PC-9 (cell line): ENCODE measurements at regions of chr5 and their contacts with region 1.

Region 1: DNA sequence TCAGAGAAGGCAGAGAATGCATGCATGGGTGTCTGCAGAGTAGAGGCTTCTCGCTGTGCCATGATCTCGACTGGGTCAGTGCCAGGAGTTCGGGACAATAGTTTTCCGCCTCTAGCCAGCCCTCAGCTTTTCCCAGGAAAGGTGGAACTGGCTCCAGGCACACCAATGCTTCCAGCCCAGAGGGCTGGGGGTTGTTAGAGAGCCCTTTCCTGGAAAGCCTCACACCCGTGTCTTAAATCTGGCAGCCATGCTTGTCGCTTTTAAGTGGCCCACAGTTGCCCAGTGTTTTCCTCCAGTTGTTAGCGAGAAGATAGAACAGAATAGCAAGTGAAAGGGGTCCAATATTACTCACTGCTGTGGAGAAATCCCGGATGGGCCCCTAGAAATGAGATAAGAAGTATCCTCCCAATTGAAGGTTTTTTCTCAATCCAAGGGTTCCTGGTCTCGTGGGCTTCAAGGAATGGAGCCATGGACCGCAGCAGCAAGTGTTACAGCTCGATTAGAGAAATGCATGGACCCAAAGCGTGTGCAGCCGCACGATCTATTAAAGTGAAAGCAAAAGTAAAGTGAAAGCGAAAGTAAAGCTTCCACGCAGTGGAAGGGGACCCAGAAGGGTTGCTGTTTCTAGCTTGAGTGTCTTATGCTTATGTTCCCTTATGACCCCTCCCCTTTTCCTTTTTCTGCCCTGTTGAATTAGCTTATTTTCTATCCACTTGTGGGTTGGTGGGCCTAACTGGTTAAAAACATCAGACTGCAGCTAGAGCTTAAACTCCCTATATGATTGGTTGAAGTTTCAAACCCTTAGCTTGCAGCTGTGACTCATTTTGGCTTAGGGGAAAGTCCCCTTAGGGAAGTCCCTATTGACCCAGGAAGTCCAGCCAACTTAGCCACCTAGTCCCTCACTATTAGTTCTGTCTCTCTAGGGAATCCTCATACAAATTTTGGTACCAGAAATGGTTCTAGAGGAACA is 1111.7 kb downstream of the TAF11L14 start:
- DNase-seq: peak; percentile 63 to 73
- H3K4me3 ChIP-seq: peak overlapping the region; percentile 75
- H3K27ac ChIP-seq: peak overlapping the region; percentile 21
- H3K4me1 ChIP-seq: peaks cover 7% of the 10 kb centered on the region
- H3K27me3 ChIP-seq: no peaks in the 10 kb centered on the region
- CTCF ChIP-seq: no peak

Region 2: DNA sequence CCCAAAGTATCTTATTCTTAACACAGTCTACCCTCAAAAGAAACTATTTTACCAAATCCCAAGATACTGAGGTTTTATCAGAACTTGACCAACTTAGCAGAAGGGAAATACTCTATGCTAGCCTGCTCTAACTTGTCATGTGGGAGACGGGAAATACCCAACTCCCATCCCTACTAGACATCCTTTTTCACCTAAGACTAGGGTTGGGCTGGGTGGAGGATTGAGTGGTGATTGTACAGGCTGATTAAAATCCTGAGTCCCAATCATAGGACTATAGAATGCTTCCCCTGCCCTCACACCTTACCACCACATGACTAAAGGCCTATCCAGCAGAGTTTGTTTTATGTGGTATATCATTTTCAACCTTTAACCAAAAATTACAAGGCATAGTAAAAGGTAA is 325.2 kb before region 1 on chr5:
- CTCF ChIA-PET with region 1: no interaction called
- POLR2A ChIA-PET with region 1: no interaction called
- intact Hi-C with region 1: no loop called
- DNase-seq: no peak
- H3K4me3 ChIP-seq: no peak overlapping the region
- H3K27ac ChIP-seq: no peak overlapping the region
- H3K4me1 ChIP-seq: no peaks in the 10 kb centered on the region
- H3K27me3 ChIP-seq: no peaks in the 10 kb centered on the region
- CTCF ChIP-seq: no peak

Region 3: DNA sequence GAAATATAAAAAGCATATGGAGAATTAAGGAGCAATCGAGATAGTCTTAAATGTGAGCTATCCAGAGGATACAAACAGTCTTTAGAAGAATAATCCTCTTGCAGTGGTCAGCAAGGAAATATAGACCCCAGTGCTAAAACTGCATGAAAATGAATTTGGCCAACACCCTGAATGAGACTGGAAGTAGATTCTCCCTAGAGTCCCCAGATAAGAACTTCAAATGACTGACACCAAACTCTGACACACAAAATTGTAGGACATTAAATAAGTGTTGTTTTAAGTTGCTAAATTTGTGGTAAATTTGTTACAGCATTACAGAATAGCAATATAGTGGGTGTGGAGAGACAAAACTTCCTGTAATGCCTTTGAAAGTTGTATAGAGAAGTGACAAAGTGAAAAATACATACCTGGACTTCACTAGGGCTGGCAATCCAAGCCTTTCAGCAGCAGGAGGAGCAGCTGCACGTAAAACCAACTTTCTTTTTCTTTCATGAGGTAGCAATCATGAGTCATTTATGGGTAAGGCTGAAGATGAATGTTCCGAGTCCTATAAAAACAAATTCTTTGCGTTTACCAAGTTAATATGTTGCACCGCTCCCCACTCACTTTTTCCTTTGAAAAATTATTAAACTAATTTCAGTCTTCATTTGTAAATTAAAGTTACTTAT is 26.4 kb after region 1 on chr5:
- CTCF ChIA-PET with region 1: no interaction called
- POLR2A ChIA-PET with region 1: no interaction called
- intact Hi-C with region 1: loop called (anchors 1 kb)
- DNase-seq: peak; percentile 48 to 56
- H3K4me3 ChIP-seq: no peak overlapping the region
- H3K27ac ChIP-seq: no peak overlapping the region
- H3K4me1 ChIP-seq: no peaks in the 10 kb centered on the region
- H3K27me3 ChIP-seq: no peaks in the 10 kb centered on the region
- CTCF ChIP-seq: peak; percentile 55

Region 4: GRCh38 chr5:18944771-18945170 is 198.8 kb after region 1 on chr5:
- CTCF ChIA-PET with region 1: no interaction called
- POLR2A ChIA-PET with region 1: no interaction called
- intact Hi-C with region 1: no loop called
- DNase-seq: no peak
- H3K4me3 ChIP-seq: no peak overlapping the region
- H3K27ac ChIP-seq: no peak overlapping the region
- H3K4me1 ChIP-seq: no peaks in the 10 kb centered on the region
- H3K27me3 ChIP-seq: no peaks in the 10 kb centered on the region
- CTCF ChIP-seq: no peak

Region 5: DNA sequence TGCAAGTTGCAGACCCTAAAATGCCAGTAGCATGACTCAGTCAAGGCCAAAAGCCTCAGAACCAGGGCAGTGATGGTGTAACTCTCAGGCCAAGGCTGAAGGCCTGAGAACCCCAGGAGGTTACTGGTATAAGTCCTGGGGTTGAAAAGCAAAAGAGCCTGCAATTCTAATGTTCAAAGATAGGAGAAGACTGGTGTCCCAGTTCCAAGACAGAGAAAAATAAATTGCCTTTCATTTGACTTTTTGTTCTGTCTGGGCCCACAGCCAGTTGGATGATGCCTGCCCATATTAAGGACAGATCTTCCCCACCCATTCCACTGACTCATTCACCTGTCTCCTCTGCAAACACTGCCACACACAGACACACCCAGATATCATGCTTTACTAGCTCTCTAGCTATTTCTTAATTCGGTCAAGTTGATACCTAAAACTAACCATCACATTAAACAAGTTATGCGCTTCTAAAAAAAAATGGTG is 569.0 kb after region 1 on chr5:
- CTCF ChIA-PET with region 1: interaction called, 4 read pairs
- POLR2A ChIA-PET with region 1: no interaction called
- intact Hi-C with region 1: loop called (anchors 10 kb)
- DNase-seq: peak; percentile 65 to 87
- H3K4me3 ChIP-seq: no peak overlapping the region
- H3K27ac ChIP-seq: no peak overlapping the region
- H3K4me1 ChIP-seq: 0 out of 2 replicates have a peak, but pooled peaks cover 5% of the 10 kb centered on the region
- H3K27me3 ChIP-seq: no peaks in the 10 kb centered on the region
- CTCF ChIP-seq: peak; percentile 38; the same call in 1 of the 2 replicates

Region 6: GRCh38 chr5:19564036-19564435 is 818.1 kb after region 1 on chr5:
- CTCF ChIA-PET with region 1: no interaction called
- POLR2A ChIA-PET with region 1: interaction called, 11 read pairs
- intact Hi-C with region 1: no loop called
- DNase-seq: peak in 1 of 2 experiments; percentile 12
- H3K4me3 ChIP-seq: no peak overlapping the region
- H3K27ac ChIP-seq: no peak overlapping the region
- H3K4me1 ChIP-seq: no peaks in the 10 kb centered on the region
- H3K27me3 ChIP-seq: no peaks in the 10 kb centered on the region
- CTCF ChIP-seq: no peak